WTC11 (cell line): ENCODE measurements at regions of chr7 and their contacts with region 1.

Region 1: DNA sequence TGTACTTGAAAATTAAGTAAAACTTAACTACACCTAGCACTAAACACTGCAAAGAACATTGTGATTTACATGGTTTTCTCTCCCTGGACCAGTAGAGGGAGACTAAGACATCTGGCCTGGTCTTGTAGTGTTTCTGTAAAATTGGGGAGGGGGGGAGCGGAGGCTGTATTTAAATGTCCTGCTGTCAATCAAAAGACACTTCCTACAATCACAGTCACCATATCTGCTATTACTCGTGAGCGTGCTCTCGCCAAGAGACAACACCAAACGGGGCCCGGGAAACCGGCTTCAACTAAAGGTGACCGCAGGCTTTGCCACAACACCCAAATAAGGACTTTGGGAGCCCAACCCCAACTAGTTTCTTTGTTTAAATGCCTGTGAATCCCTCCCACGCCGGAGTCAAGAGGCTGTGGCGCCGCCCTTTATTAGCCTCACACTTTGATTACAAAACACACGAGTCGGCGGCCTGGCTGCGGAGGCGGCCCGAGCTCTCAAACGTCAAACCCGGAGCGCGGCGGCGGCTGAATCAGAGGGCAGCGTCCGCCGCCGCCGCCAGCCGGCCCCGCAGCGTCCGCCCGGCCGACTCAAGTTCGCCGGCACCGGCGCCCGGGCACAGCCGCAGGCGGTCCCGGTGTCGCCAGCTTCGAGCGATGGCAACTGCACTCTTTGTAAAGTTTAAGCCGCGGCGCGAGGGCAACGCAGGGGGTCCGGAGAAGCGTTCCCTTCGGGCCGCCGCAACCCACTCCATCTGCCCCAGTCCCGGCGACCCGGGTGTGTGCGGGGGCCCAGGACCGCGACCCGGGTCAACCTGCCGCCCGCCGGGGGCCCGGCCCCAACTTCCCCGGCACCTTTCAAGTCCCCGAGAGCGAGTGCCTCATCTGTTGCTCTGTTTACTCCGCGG is 1.3 kb downstream of the KDM7A start:
- DNase-seq: peak; percentile 65
- ATAC-seq: peak; percentile 46
- H3K4me3 Mint-ChIP-seq: peak overlapping the region; percentile 82
- H3K27ac Mint-ChIP-seq: peak overlapping the region; percentile 78
- H3K4me1 Mint-ChIP-seq: peaks cover 27% of the 10 kb centered on the region
- H3K27me3 Mint-ChIP-seq: peaks cover 29% of the 10 kb centered on the region
- CTCF ChIP-seq: peak; percentile 51; the same call in 1 of the 2 replicates

Region 2: DNA sequence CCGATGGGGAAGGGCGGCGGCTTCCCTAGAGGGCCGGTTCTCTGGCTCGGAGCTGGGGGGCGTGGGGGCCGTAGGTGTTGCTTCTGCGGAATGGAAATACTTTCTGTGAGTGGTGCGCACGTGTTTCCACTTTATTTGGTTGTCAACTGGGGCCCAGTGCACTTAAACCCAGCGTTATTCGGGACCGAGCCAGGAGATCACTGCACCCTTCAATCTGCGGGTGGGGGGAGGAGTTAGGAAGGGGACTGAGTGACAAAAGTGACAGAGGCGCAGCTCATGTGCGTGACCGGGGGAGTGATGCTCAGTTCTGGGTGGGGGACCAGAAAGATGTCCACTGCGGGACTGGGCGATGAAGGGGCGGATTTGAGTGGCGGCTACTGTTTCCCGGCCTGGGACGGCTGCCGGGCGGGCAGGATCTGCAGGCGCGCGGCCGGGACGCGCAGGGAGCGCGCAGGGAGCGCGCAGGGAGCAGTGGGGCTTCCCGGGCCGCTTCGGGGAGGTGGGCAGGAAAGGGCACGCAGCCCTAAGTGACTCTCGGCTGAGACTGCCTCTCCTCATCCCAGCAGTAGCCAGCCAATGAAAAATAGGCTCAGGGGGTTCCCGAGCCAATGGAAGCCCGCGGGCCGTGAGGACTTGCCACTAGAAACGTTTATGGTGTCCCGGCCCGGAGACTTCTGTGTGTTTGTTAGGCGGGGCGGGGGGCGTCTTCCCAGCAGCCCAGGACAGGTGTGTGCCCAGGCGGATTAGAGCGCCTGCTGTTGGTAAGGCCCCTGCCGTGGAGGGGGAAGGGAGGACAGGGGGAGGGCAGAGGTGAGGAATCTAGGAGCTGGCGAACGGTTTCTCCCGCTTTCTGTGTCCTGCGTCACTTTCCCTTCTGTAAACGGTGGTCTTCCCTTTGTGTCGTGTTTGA is 55.6 kb after region 1 on chr7:
- CTCF ChIA-PET with region 1: interaction called, 15 read pairs
- POLR2A ChIA-PET with region 1: interaction called, 9 read pairs
- DNase-seq: peak; percentile 90
- ATAC-seq: peak; percentile 92
- H3K4me3 Mint-ChIP-seq: peak overlapping the region; percentile 86
- H3K27ac Mint-ChIP-seq: peak overlapping the region; percentile 98
- H3K4me1 Mint-ChIP-seq: peaks cover 21% of the 10 kb centered on the region
- H3K27me3 Mint-ChIP-seq: peaks cover 6% of the 10 kb centered on the region; the same call in 1 of the 2 replicates
- CTCF ChIP-seq: no peak

Region 3: DNA sequence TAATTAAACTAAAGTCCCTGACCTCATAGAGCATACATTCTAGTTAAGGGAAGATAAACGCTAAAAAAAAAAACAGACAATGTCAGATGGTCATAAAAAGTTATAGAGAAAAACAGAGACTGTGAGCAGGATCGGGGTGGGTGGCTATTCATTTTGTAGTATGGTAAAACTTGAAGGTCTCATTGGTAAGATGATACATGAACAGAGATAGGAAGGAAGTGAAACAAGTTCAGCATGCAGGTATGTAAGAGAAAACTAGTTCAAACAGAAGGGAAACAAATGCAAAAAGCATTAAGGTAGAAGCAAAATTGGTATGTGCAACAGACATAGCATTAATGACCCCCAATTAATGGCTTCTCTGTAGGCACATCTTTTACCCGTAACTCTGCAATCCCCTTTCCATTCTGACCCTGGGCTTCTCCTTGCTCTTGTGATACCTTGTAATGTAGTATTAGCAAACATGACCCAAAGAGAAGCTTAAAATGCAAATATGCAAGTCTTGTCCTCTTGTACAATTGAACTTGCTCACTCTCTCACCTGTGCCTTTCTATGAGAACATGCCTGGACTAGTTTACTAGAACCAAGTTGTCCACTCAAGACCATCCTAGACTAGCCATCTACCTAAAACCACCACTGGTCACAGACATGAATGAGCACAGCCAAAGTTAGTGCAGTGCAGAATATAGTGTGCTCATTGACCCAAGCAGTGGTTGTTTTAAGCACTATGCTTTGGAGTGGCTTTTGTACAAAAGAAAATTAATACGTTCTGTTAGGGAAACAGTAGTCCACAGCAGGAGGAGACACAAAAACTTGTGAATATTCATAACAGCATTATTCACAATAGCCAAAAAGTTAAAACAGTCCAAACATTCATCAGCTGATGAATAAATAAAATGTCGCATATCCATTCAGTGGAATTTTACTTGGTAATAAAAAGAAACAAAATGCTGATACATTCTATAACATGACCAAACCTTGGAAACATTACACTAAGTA is 692.3 kb after region 1 on chr7:
- CTCF ChIA-PET with region 1: no interaction called
- POLR2A ChIA-PET with region 1: no interaction called
- DNase-seq: no peak
- ATAC-seq: no peak
- H3K4me3 Mint-ChIP-seq: no peak overlapping the region
- H3K27ac Mint-ChIP-seq: peak overlapping the region; percentile 46
- H3K4me1 Mint-ChIP-seq: peaks cover 27% of the 10 kb centered on the region
- H3K27me3 Mint-ChIP-seq: no peaks in the 10 kb centered on the region
- CTCF ChIP-seq: no peak